PC-3 (cell line): ENCODE measurements at regions of chr19 and their contacts with region 1.

Region 1: GRCh38 chr19:35828692-35829301 is 16.2 kb upstream of the PRODH2 start:
- DNase-seq: peak; percentile 61
- ATAC-seq: peak; percentile 51; the same call in 1 of the 2 replicates
- H3K4me3 ChIP-seq: no peak overlapping the region
- H3K27ac ChIP-seq: no peak overlapping the region
- H3K4me1 ChIP-seq: no peaks in the 10 kb centered on the region
- H3K27me3 ChIP-seq: peaks cover 27% of the 10 kb centered on the region
- CTCF ChIP-seq: no peak

Region 2: DNA sequence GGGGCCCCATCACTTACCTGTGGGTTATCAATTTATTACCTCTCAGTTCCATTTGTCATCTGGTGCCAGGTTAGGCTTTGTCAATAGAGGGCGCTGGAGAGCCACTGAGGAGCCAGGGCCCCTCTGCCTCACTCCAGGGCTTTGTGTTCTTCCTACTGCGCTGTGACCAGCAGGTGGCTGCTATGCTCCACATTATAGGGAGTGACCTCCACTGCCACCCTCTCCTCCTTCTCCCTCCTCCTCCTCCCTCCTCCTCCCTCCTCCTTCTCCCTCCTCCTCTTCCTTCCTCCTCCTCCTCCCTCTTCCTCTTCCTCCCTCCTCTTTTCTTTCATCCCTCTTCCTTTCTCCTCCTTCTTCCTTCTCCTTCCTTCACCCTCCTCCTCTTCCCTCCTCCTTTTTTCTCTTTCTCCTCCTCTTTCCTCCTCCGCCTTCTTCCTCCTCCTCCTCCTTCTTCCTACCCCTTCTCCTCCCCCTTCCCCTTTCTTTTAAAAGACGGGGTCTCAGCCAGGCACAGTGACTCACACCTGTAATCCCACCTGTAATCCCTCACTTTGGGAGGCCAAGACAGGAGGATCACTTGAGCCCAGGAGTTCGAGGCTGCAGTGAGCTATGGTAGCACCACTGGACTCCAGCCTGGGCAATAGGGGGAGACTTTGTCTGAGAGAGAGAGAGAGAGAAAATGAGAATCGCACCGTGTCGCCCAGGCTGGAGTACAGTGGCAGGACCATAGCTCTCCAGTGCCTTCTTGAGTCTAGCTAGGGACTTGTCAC is 134.8 kb before region 1 on chr19:
- CTCF ChIA-PET with region 1: no interaction called
- POLR2A ChIA-PET with region 1: no interaction called
- intact Hi-C with region 1: loop called (anchors 10 kb)
- DNase-seq: peak; percentile 86
- ATAC-seq: peak; percentile 100
- H3K4me3 ChIP-seq: no peak overlapping the region
- H3K27ac ChIP-seq: no peak overlapping the region
- H3K4me1 ChIP-seq: no peaks in the 10 kb centered on the region
- H3K27me3 ChIP-seq: no peaks in the 10 kb centered on the region
- CTCF ChIP-seq: peak; percentile 84

Region 3: GRCh38 chr19:36103626-36104552 is 275.1 kb after region 1 on chr19:
- CTCF ChIA-PET with region 1: no interaction called
- POLR2A ChIA-PET with region 1: no interaction called
- intact Hi-C with region 1: no loop called
- DNase-seq: peak; percentile 51
- ATAC-seq: peak; percentile 65; the same call in 1 of the 2 replicates
- H3K4me3 ChIP-seq: no peak overlapping the region
- H3K27ac ChIP-seq: no peak overlapping the region
- H3K4me1 ChIP-seq: peaks cover 11% of the 10 kb centered on the region
- H3K27me3 ChIP-seq: no peaks in the 10 kb centered on the region
- CTCF ChIP-seq: no peak